ENCODE measurements at regions of chr3 and their contacts with region 1.

Region 1: GRCh38 chr3:99753268-99753975 is 64.2 kb upstream of the CMSS1 start:
- DNase-seq: peak; percentile 40
- ATAC-seq: peak; percentile 87
- H3K4me3 ChIP-seq: no peak overlapping the region
- H3K27ac ChIP-seq: no peak overlapping the region
- H3K4me1 ChIP-seq: no peaks in the 10 kb centered on the region
- H3K27me3 ChIP-seq: no peaks in the 10 kb centered on the region
- CTCF ChIP-seq: peak; percentile 65 to 80 (median 71); a peak in 5 of 6 replicates
- EP300 ChIP-seq: no peak
- POLR2A ChIP-seq: no peak
- RAD21 ChIP-seq: peak; percentile 91

Region 2: GRCh38 chr3:99023590-99024192 is 729.7 kb before region 1 on chr3:
- CTCF ChIA-PET with region 1: interaction called, 24 read pairs
- POLR2A ChIA-PET with region 1: no interaction called
- RAD21 ChIA-PET with region 1: interaction called, 3 read pairs
- SMC1A ChIA-PET with region 1: interaction called, 4 read pairs
- in situ Hi-C with region 1: loop called (anchors 10 kb)
- intact Hi-C with region 1: loop called (anchors 2 kb)
- DNase-seq: no peak
- ATAC-seq: peak; percentile 60; the same call in 2 of the 3 replicates
- H3K4me3 ChIP-seq: no peak overlapping the region
- H3K27ac ChIP-seq: no peak overlapping the region
- H3K4me1 ChIP-seq: no peaks in the 10 kb centered on the region
- H3K27me3 ChIP-seq: no peaks in the 10 kb centered on the region
- CTCF ChIP-seq: peak; percentile 53 to 68 (median 60)
- EP300 ChIP-seq: no peak
- POLR2A ChIP-seq: no peak
- RAD21 ChIP-seq: peak; percentile 81

Region 3: DNA sequence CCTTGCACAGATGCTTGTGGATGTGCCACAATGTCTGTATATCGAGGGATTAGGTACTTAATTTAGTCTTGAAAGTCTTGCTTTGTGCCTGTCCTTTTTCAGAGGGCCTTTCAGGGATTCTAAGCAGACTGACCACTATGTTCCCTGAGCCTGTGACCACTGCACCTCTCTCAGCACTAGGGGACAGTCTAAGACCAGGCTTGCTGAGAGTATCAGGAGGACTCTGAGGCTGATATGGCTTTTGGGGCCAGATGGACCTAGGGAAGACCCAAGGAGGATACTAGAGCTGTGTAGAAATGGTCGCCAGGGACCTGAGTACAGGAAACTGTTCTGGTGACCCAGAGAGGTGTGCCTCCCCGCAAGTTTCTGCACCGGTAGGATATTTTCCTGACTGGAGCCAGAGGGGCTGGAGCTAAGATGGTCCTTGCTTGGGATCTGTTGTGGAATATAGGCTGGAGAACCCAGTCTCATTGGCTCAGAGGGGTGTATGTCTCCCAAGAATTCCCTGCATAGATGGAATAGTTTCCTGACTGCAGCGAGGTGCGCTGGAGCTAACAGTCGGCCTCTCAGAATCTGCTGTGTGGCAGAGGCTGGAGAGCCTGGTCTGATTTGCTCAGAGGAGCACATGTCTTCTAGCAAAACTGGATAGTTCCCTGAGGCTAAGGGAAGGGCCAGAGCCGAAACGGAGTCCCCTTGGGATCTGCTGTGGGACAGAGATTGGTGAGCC is 638.7 kb before region 1 on chr3:
- CTCF ChIA-PET with region 1: interaction called, 3 read pairs
- POLR2A ChIA-PET with region 1: no interaction called
- RAD21 ChIA-PET with region 1: no interaction called
- SMC1A ChIA-PET with region 1: no interaction called
- in situ Hi-C with region 1: no loop called
- intact Hi-C with region 1: loop called (anchors 10 kb)
- DNase-seq: no peak
- ATAC-seq: peak; percentile 87
- H3K4me3 ChIP-seq: no peak overlapping the region
- H3K27ac ChIP-seq: no peak overlapping the region
- H3K4me1 ChIP-seq: no peaks in the 10 kb centered on the region
- H3K27me3 ChIP-seq: no peaks in the 10 kb centered on the region
- CTCF ChIP-seq: peak; percentile 34 to 72 (median 61); a peak in 5 of 6 replicates
- EP300 ChIP-seq: no peak
- POLR2A ChIP-seq: no peak
- RAD21 ChIP-seq: peak; percentile 98

Region 4: DNA sequence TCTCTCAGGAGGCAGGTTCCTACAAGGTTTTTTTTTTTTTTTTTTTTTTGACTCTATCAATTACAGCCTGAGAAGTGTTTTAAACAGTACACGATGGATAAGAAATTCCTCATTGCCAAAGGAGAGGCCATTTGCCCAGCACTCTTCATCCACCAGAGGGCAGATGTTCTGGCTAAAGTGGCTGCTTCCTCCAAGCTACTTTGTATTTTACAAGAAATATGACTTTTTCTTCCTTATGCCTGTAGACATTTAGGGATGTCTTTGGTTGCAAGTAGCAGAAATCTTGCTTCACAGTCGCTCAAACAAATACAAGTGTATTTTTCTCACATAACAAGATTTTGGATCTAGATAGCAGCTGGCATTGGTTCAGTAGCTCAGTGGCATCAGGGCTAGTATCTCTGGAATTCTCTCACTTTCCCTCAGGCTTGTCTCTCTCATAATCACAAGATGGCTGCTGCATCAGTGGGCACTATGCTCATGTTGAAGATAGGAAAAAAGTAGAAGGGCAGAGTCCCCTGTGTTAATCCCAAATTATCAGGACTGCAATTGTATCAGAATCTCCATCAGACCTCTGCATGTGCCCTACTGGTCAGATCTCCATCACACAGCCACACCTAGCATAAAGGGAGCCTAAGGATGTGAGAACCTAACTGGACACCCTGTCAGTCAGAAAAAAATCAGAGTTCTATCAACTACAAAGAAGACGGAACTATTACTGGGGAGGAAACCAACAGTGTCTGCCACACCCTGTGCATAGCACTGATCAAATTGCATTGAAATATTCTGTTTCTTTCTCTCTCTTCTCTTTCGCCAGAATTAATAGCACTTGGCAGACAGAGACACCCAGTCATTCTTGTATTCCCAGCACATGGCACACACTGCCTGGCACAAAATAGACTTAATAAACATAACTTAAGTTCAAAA is 253.9 kb before region 1 on chr3:
- CTCF ChIA-PET with region 1: interaction called, 4 read pairs
- POLR2A ChIA-PET with region 1: no interaction called
- RAD21 ChIA-PET with region 1: no interaction called
- SMC1A ChIA-PET with region 1: interaction called, 3 read pairs
- in situ Hi-C with region 1: no loop called
- intact Hi-C with region 1: loop called (anchors 1 kb)
- DNase-seq: peak; percentile 16
- ATAC-seq: peak; percentile 87
- H3K4me3 ChIP-seq: no peak overlapping the region
- H3K27ac ChIP-seq: no peak overlapping the region
- H3K4me1 ChIP-seq: no peaks in the 10 kb centered on the region
- H3K27me3 ChIP-seq: no peaks in the 10 kb centered on the region
- CTCF ChIP-seq: peak; percentile 73 to 74 (median 74)
- EP300 ChIP-seq: no peak
- POLR2A ChIP-seq: no peak
- RAD21 ChIP-seq: peak; percentile 75

Region 5: DNA sequence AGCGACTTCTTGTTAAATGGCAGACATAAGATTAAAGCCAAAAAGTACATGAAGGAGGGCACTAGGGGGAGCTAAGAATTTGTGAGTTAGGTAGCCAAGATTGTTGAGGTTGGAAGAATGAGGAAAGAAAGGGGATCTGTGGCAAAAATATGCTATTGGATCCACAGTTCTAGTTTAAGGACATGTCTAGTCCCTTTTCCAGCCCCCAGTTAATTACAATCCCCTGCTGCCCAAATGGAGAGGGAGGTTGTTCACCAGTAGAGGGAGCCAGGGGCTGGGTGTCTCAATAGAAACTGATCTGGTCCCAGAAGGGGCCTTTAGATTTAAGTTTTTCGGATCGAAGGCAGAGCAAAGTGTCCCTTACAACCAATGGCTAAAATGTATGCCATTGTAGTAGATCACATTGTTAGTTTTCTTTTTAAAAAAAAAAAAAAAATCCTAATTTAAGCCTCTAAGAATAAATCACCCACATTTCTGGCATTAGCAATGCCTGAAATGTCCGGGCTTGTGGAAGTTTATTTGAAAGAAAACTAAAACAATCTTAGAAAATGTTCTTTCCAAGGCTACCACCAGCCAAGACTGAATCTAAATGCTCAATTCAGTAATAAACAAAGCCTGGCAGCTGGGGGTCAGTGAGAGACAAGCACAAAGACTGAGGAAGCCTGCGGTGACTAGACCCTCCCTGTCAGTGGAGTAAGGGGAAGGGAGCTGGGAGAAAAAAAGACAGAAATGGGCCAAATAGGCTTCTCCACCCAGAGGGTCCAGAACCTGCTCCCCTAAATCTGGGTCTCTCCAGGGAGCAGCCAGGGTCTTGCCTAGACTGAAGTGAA is 107.9 kb before region 1 on chr3:
- CTCF ChIA-PET with region 1: interaction called, 7 read pairs
- POLR2A ChIA-PET with region 1: no interaction called
- RAD21 ChIA-PET with region 1: no interaction called
- SMC1A ChIA-PET with region 1: interaction called, 3 read pairs
- in situ Hi-C with region 1: no loop called
- intact Hi-C with region 1: loop called (anchors 2 kb)
- DNase-seq: no peak
- ATAC-seq: peak; percentile 70
- H3K4me3 ChIP-seq: no peak overlapping the region
- H3K27ac ChIP-seq: no peak overlapping the region
- H3K4me1 ChIP-seq: no peaks in the 10 kb centered on the region
- H3K27me3 ChIP-seq: peaks cover 0 to 2% of the 10 kb centered on the region in 2 experiments; a peak in 1 of 4 replicates
- CTCF ChIP-seq: peak; percentile 28 to 69 (median 68)
- EP300 ChIP-seq: no peak
- POLR2A ChIP-seq: no peak
- RAD21 ChIP-seq: peak; percentile 45